A549 (cell line): ENCODE measurements at regions of chr12 and their contacts with region 1.

Region 1: DNA sequence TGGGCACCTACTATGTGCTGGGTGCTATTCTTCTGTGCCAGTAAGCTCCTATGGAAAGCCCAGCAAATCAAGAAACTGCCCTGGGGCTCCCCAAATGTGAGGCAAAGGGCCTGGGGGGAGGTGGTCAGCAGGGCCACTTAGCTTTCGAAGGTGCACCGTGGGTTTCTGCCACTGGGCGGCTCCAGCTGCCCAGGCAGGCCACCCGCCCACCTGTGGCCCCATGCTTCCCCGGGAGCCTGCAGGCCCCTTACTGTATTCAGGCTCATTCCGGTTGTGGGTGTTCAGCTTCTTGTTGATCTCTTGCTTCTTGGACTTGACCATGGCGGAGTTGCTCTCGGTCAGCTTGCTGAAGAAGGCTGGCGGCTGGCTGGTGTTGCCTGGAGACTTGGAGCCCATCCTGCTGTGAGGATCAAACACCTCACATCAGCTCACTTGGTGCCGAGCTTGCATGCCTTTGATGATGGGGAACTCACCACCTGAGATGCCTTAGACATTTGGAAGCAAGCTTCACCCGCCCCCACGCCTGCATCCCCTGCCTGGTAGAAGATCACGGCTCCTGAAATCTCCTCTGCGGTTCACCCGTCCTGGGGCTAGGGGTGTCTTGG is 37.3 kb downstream of the RFLNA start:
- DNase-seq: peak; percentile 50 to 56
- ATAC-seq: peak; percentile 45 to 55; a peak in 5 of 6 replicates
- H3K4me3 ChIP-seq: no peak overlapping the region
- H3K27ac ChIP-seq: no peak overlapping the region
- H3K4me1 ChIP-seq: no peaks in the 10 kb centered on the region
- CTCF ChIP-seq: peak; percentile 34
- EP300 ChIP-seq: no peak
- POLR2A ChIP-seq: no peak
- RAD21 ChIP-seq: peak; percentile 40 to 43; a peak in 4 of 5 replicates

Region 2: GRCh38 chr12:124321040-124321481 is 11.1 kb before region 1 on chr12:
- CTCF ChIA-PET with region 1: interaction called, 16 read pairs
- POLR2A ChIA-PET with region 1: no interaction called
- DNase-seq: peak; percentile 61 to 71
- ATAC-seq: peak; percentile 25 to 85
- H3K4me3 ChIP-seq: no peak overlapping the region
- H3K27ac ChIP-seq: 0 out of 6 replicates have a peak overlapping the region, but pooled peaks of 1 of the 2 experiments have one; percentile 9
- H3K4me1 ChIP-seq: no peaks in the 10 kb centered on the region
- CTCF ChIP-seq: peak; percentile 77
- EP300 ChIP-seq: no peak
- POLR2A ChIP-seq: no peak
- RAD21 ChIP-seq: peak; percentile 84 to 90

Region 3: DNA sequence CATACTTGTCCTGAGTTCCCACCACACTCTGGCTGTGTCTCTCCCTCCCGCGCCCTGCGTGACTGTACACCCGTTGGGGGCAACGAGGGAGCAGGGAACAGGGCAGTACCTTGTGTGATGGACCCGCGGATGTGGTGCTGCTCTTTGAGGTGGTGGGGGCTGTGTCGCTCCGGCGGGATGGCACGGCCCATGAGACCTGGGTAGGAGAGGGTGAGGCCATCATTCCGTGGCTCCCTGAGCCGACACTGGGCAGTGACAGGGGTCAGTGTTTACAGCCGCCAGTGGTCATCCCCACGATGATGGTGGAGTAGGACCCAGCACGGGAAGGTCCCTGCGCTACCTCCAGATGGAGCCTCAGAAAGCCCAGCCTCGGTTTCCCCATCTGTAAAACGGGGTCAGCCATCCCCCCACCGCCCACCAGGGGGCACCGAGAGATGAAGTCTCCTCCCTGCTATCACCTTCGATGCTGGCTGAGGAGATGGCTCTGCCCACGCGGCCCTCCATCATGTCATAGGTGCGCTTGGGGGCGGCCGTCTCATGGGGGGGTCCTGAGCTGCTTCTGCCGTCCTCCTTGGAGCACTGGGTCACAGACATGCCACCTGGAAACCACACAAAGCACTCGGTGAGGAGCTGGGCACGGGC is 15.7 kb after region 1 on chr12:
- CTCF ChIA-PET with region 1: interaction called, 12 read pairs
- POLR2A ChIA-PET with region 1: no interaction called
- DNase-seq: no peak
- ATAC-seq: peak in 1 of 2 experiments; percentile 18; a peak in 3 of 6 replicates
- H3K4me3 ChIP-seq: no peak overlapping the region
- H3K27ac ChIP-seq: peak overlapping the region in 1 of 2 experiments; percentile 56; a peak in 3 of 6 replicates
- H3K4me1 ChIP-seq: peaks cover 3% of the 10 kb centered on the region
- CTCF ChIP-seq: peak; percentile 43
- EP300 ChIP-seq: no peak
- POLR2A ChIP-seq: no peak
- RAD21 ChIP-seq: peak; percentile 46 to 50; a peak in 3 of 5 replicates